Caco-2 (cell line): ENCODE measurements at regions of chrX and their contacts with region 1.

Region 1: GRCh38 chrX:71652405-71652804 is 14.9 kb upstream of the LOC101059915 start:
- DNase-seq: peak; percentile 47 to 52
- H3K4me3 ChIP-seq: no peak overlapping the region
- H3K4me3 Mint-ChIP-seq: no peak overlapping the region
- H3K27ac Mint-ChIP-seq: no peak overlapping the region
- H3K4me1 ChIP-seq: no peaks in the 10 kb centered on the region
- H3K4me1 Mint-ChIP-seq: no peaks in the 10 kb centered on the region
- H3K27me3 ChIP-seq: no peaks in the 10 kb centered on the region
- H3K27me3 Mint-ChIP-seq: no peaks in the 10 kb centered on the region
- CTCF ChIP-seq: peak; percentile 35 to 53

Region 2: GRCh38 chrX:71256051-71256450 is 396.4 kb before region 1 on chrX:
- CTCF ChIA-PET with region 1: no interaction called
- POLR2A ChIA-PET with region 1: no interaction called
- intact Hi-C with region 1: no loop called
- DNase-seq: no peak
- H3K4me3 ChIP-seq: no peak overlapping the region
- H3K4me3 Mint-ChIP-seq: peak overlapping the region; percentile 85
- H3K27ac Mint-ChIP-seq: peak overlapping the region; percentile 82
- H3K4me1 ChIP-seq: peaks cover 15% of the 10 kb centered on the region; the same call in 1 of the 2 replicates
- H3K4me1 Mint-ChIP-seq: peaks cover 7% of the 10 kb centered on the region
- H3K27me3 ChIP-seq: no peaks in the 10 kb centered on the region
- H3K27me3 Mint-ChIP-seq: no peaks in the 10 kb centered on the region
- CTCF ChIP-seq: no peak

Region 3: DNA sequence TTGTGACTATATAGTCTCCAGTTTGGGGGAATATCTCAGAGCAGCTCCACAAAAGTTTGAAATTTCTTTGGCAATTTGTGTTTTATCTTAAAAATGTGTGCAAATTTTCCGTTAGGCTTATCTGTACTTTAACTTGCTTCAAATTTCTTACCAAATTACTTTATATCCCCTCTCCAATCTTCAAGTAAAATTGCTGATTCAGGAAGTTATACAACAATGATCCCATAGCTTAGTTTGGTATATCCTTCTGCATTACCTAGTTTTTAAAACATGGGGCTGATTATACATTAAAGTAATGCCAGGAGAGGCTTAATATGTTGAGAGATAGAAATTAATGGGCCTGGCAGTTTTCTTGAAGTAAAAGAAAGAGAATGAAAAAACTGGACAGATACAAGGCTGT is 219.7 kb before region 1 on chrX:
- CTCF ChIA-PET with region 1: no interaction called
- POLR2A ChIA-PET with region 1: no interaction called
- intact Hi-C with region 1: loop called (anchors 2 kb)
- DNase-seq: no peak
- H3K4me3 ChIP-seq: no peak overlapping the region
- H3K4me3 Mint-ChIP-seq: no peak overlapping the region
- H3K27ac Mint-ChIP-seq: no peak overlapping the region
- H3K4me1 ChIP-seq: no peaks in the 10 kb centered on the region
- H3K4me1 Mint-ChIP-seq: no peaks in the 10 kb centered on the region
- H3K27me3 ChIP-seq: no peaks in the 10 kb centered on the region
- H3K27me3 Mint-ChIP-seq: no peaks in the 10 kb centered on the region
- CTCF ChIP-seq: no peak

Region 4: DNA sequence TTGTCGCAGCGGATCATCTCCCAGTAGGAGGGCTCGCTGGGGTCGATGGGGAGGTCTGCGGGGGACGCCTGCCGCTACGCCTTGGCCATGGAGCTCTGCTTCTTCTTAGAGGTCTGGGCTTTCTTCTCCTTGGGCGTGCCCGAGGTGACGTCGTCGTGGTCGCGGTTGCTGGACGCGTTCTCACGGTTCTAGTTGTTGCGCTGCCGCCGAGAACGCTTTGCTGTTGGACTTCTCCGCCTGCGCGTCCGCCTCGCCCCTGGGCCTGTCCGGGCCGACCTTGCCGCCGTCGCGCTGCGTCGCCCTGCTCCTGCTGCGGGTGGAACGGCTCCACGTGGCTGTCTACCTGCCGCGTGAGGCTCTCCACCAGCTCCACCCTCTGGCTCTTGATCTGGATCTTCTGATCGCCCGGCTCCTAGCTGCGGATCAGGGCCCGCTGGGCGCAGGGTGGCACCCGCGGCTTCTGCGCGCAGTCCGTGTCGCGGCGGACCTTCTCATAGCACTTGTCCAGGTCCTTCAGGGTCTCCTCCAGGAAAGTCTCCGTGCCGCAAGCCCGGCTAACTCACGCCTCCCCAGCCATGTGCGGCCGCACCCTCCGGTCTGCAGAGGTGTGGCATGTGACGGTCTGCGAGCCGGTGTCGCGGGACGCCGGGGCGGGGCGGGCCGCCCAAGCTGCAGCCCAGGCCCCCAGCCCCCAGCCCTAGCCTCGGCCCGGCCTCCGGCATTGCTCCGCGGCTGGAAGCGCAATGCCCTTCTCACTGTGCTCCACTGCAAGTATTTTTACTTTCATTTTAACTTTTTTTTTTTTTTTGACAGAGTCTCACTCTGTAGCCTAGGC is 160.0 kb before region 1 on chrX:
- CTCF ChIA-PET with region 1: no interaction called
- POLR2A ChIA-PET with region 1: no interaction called
- intact Hi-C with region 1: no loop called
- DNase-seq: peak; percentile 62 to 66
- H3K4me3 ChIP-seq: peak overlapping the region; percentile 49
- H3K4me3 Mint-ChIP-seq: peak overlapping the region; percentile 81
- H3K27ac Mint-ChIP-seq: peak overlapping the region; percentile 78
- H3K4me1 ChIP-seq: no peaks in the 10 kb centered on the region
- H3K4me1 Mint-ChIP-seq: no peaks in the 10 kb centered on the region
- H3K27me3 ChIP-seq: no peaks in the 10 kb centered on the region
- H3K27me3 Mint-ChIP-seq: no peaks in the 10 kb centered on the region
- CTCF ChIP-seq: no peak

Region 5: GRCh38 chrX:71573591-71573990 is 78.8 kb before region 1 on chrX:
- CTCF ChIA-PET with region 1: no interaction called
- POLR2A ChIA-PET with region 1: no interaction called
- intact Hi-C with region 1: loop called (anchors 5 kb)
- DNase-seq: no peak
- H3K4me3 ChIP-seq: no peak overlapping the region
- H3K4me3 Mint-ChIP-seq: no peak overlapping the region
- H3K27ac Mint-ChIP-seq: no peak overlapping the region
- H3K4me1 ChIP-seq: no peaks in the 10 kb centered on the region
- H3K4me1 Mint-ChIP-seq: no peaks in the 10 kb centered on the region
- H3K27me3 ChIP-seq: no peaks in the 10 kb centered on the region
- H3K27me3 Mint-ChIP-seq: no peaks in the 10 kb centered on the region
- CTCF ChIP-seq: no peak

Region 6: GRCh38 chrX:71586929-71587328 is 65.5 kb before region 1 on chrX:
- CTCF ChIA-PET with region 1: no interaction called
- POLR2A ChIA-PET with region 1: no interaction called
- intact Hi-C with region 1: no loop called
- DNase-seq: no peak
- H3K4me3 ChIP-seq: no peak overlapping the region
- H3K4me3 Mint-ChIP-seq: no peak overlapping the region
- H3K27ac Mint-ChIP-seq: no peak overlapping the region
- H3K4me1 ChIP-seq: 0 out of 2 replicates have a peak, but pooled peaks cover 4% of the 10 kb centered on the region
- H3K4me1 Mint-ChIP-seq: peaks cover 16% of the 10 kb centered on the region
- H3K27me3 ChIP-seq: no peaks in the 10 kb centered on the region
- H3K27me3 Mint-ChIP-seq: no peaks in the 10 kb centered on the region
- CTCF ChIP-seq: no peak

Region 7: DNA sequence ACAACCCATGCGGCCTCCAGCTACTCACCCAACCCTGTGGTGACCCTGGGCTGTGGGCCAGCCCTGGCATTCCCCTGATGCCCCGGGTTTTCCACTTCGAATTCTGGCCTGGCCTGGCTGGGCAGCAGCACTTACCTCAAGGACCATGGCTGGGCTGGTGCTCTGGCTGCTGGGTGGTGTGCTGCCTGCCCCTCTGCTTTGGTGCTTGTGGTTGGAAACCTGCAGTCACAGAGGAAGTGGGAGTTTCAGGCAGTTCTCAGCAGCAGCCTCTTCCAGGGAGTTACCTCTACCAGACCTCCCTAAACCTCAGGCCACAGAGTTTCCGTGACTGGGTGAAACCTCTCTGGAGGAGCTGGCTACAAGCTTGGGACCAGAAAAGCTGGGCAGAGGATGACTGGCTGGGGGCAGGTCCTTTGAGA is 34.1 kb before region 1 on chrX and contains the start of gene CXCR3:
- CTCF ChIA-PET with region 1: interaction called, 3 read pairs
- POLR2A ChIA-PET with region 1: no interaction called
- intact Hi-C with region 1: loop called (anchors 5 kb)
- DNase-seq: no peak
- H3K4me3 ChIP-seq: no peak within 1 kb of the TSS
- H3K4me3 Mint-ChIP-seq: no peak within 1 kb of the TSS
- H3K27ac Mint-ChIP-seq: no peak within 1 kb of the TSS
- H3K4me1 ChIP-seq: peaks cover 11% of the 10 kb centered on the region; the same call in 1 of the 2 replicates
- H3K4me1 Mint-ChIP-seq: no peaks in the 10 kb centered on the region
- H3K27me3 ChIP-seq: no peaks in the 10 kb centered on the region
- H3K27me3 Mint-ChIP-seq: no peaks in the 10 kb centered on the region
- CTCF ChIP-seq: no peak
- total RNA-seq, gene CXCR3: not detected in 2 replicates

Region 8: GRCh38 chrX:71671043-71671780 is 18.8 kb after region 1 on chrX:
- CTCF ChIA-PET with region 1: no interaction called
- POLR2A ChIA-PET with region 1: no interaction called
- intact Hi-C with region 1: no loop called
- DNase-seq: no peak
- H3K4me3 ChIP-seq: no peak overlapping the region
- H3K4me3 Mint-ChIP-seq: no peak overlapping the region
- H3K27ac Mint-ChIP-seq: no peak overlapping the region
- H3K4me1 ChIP-seq: no peaks in the 10 kb centered on the region
- H3K4me1 Mint-ChIP-seq: no peaks in the 10 kb centered on the region
- H3K27me3 ChIP-seq: no peaks in the 10 kb centered on the region; the same call in 1 of the 2 replicates
- H3K27me3 Mint-ChIP-seq: no peaks in the 10 kb centered on the region
- CTCF ChIP-seq: no peak